AG04449 (cell line): ENCODE measurements at regions of chr6 and their contacts with region 1.

Region 1: DNA sequence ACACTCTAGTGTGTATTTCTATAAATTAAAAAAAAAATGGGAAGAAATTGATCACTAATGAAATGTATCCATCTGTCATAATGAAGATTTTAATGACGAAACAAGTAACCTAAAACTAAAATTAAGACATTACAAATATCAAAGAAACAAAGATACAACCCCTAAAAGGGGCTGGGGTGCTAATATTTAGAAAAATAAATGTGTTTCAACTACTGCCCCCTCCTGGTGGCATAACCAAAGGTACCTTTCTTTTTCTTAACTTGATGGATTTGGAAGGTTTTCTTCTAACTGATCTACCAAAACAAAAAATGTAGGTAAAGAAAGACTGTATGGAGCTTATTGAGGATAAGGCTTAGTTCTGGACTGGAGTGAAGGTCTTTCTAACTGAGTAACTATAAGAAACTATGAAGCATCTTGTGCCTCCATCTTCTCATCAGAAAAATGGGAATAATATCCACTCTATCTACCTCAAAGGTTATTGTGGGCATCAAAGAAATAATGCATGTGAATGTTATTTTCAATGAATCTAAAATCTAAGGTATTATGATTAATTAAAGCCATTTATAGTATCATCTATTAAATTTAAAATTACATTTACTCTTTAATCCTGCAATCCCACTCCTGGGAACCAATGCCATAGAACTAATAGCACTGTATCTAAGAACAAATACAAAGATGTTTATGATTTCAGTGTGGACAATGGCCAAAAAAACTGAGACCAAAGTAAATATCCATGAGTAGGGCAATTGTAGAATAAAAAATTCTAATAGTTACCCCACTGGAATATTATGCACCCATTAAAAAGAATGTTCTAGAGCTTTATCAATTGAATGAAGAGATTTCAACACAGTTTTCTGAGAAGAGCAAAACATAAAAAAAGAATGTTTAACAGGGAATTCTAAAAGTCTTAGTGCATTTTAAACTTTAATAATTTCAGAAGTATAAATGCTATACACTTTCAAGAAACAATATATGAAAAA is 117.2 kb downstream of the BACH2 start:
- DNase-seq: no peak
- H3K4me3 ChIP-seq: no peak overlapping the region
- CTCF ChIP-seq: no peak

Region 2: GRCh38 chr6:89432875-89433251 is 746.6 kb before region 1 on chr6 and contains the start of gene ANKRD6:
- CTCF ChIA-PET with region 1: no interaction called
- POLR2A ChIA-PET with region 1: no interaction called
- DNase-seq: no peak
- H3K4me3 ChIP-seq: peak within 1 kb of the TSS; percentile 52
- CTCF ChIP-seq: peak; percentile 83

Region 3: GRCh38 chr6:89970609-89971337 is 208.7 kb before region 1 on chr6:
- CTCF ChIA-PET with region 1: interaction called, 10 read pairs
- POLR2A ChIA-PET with region 1: no interaction called
- DNase-seq: no peak
- H3K4me3 ChIP-seq: no peak overlapping the region
- CTCF ChIP-seq: peak; percentile 58

Region 4: GRCh38 chr6:90190752-90191395 is 11.4 kb after region 1 on chr6:
- CTCF ChIA-PET with region 1: interaction called, 11 read pairs
- POLR2A ChIA-PET with region 1: no interaction called
- DNase-seq: no peak
- H3K4me3 ChIP-seq: no peak overlapping the region
- CTCF ChIP-seq: no peak

Region 5: DNA sequence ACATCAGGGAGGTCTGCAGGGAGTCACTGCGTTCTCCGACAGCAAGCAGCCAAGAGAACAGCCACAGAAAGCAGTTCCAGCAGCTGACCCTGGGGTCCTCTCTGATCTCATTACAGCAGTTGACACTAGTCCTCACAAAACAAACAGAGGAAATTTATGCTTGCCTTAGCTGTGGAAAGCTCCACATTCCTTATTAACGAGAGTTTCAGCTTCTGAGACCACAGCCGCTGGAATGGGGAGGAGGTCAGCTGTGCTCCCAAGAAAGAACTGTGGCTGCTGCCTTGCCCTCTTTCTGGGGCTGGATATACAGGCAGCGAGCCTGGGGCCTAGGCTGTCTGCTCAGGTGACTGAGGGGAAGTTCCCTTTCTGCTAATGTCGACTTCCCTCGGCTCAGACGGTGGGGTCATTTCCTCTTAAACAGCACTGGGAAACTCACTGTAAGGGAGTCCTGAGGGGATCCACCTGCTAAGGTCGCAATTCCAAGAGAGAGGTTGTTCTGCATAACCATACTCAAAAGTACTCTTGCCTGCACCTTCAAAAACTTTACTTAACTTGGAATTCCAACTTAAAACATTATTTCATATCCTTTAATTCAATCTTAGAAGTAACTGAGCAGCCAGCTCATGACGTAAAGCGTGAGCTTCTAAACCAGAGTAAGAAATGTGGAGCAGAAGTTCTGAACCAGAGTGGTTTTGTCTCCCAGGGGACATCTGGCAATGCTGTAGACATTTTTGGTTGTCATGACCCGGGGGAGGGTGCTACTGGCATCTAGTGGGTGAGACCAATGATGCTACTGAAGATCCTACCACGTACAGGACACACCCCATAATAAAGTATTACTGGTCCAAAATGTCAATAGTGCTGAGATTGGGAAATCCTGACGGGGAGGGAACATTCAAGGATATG is 36.8 kb after region 1 on chr6:
- CTCF ChIA-PET with region 1: interaction called, 11 read pairs
- POLR2A ChIA-PET with region 1: interaction called, 3 read pairs
- DNase-seq: peak; percentile 9
- H3K4me3 ChIP-seq: no peak overlapping the region
- CTCF ChIP-seq: no peak